ENCODE measurements at regions of chr13 and their contacts with region 1.

Region 1: DNA sequence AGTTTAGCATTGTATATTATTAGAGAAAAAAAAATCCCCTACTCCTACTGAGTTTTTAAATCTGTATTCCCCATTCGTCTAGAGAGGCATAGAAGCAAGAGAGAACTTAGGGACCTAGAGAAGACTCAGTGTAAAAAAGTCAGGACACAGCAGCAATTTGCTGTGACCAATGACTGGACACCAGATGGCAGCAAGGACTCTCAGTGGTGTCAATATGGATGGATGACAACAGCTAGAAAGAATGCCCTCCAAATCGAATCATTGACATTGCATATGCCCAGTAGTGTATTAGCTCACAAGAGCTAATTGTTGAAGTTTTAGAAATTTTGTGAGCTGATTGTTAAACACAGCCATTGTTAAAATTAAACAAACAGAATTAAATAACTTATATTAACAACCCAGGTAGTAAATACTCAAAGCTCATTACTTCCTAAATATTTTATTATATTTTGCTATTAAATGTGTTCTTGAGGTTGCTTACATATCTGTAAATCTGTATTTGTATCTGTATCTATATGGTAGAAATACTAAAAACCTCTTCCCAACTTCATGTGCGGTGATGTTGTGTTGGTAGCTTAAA is 43.9 kb downstream of the SIAH3 start:
- DNase-seq: peak; percentile 55
- H3K4me3 Mint-ChIP-seq: no peak overlapping the region
- H3K27ac Mint-ChIP-seq: no peak overlapping the region
- H3K4me1 Mint-ChIP-seq: no peaks in the 10 kb centered on the region
- H3K27me3 Mint-ChIP-seq: no peaks in the 10 kb centered on the region

Region 2: DNA sequence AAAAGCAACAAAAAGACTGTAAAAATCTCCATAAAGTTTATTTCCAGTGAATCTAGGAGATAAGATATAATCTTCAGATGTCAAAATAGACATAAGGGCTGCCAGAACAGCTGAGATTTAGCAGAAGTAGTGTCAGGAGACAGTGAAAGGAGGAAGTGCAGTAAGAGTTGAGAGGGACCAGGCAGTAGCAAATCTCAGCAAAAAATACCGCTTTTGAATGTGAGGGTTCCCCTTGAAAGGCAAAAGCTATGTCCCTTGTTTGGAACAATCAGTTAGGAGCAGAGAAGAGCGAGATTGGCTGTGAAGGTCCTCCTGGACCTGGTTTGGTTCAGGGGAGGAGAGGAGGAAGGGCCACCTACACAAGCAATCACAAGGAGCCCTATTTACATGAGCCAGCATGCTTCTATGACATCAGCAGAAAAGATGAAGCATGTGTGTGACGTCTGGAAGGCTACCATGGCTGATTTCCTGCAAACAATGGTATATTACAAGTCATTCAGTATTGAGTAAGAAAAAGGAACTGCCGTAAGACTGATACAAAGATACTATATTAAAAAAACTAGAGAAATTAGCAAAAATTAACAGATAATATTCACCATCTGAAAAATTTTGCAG is 142.9 kb after region 1 on chr13:
- CTCF ChIA-PET with region 1: no interaction called
- intact Hi-C with region 1: no loop called
- DNase-seq: no peak
- H3K4me3 Mint-ChIP-seq: no peak overlapping the region
- H3K27ac Mint-ChIP-seq: no peak overlapping the region
- H3K4me1 Mint-ChIP-seq: no peaks in the 10 kb centered on the region
- H3K27me3 Mint-ChIP-seq: no peaks in the 10 kb centered on the region

Region 3: GRCh38 chr13:46168341-46168740 is 360.7 kb after region 1 on chr13:
- CTCF ChIA-PET with region 1: no interaction called
- intact Hi-C with region 1: no loop called
- DNase-seq: peak; percentile 89
- H3K4me3 Mint-ChIP-seq: peak overlapping the region; percentile 67
- H3K27ac Mint-ChIP-seq: peak overlapping the region; percentile 94
- H3K4me1 Mint-ChIP-seq: peaks cover 92% of the 10 kb centered on the region
- H3K27me3 Mint-ChIP-seq: no peaks in the 10 kb centered on the region

Region 4: GRCh38 chr13:46288570-46289259 is 481.1 kb after region 1 on chr13:
- CTCF ChIA-PET with region 1: no interaction called
- intact Hi-C with region 1: loop called (anchors 1 kb)
- DNase-seq: no peak
- H3K4me3 Mint-ChIP-seq: no peak overlapping the region
- H3K27ac Mint-ChIP-seq: no peak overlapping the region
- H3K4me1 Mint-ChIP-seq: peaks cover 17% of the 10 kb centered on the region
- H3K27me3 Mint-ChIP-seq: no peaks in the 10 kb centered on the region